Mammary epithelial cell (primary cell): ENCODE measurements at regions of chr7 and their contacts with region 1.

Region 1: DNA sequence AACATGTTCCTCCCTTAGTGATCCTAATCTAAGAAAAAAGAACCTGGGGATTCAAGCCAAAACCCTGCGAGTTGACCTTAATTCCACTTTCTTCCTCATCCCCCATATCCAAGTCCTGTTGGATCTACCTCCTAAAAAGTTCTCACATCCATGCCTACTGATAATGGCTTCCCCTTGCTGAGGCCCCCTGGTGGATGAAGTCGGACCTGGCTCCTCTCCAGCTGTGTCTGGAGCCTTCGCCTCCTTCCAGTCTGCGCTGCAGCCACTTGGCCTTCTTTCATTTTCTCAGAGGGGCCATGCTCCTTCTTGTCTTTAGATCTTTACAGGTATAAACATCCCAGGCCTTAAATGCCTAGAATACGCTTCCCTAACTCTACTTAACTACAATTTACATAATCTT is 8.1 kb downstream of the PDE1C start:
- DNase-seq: peak; percentile 64
- H3K4me3 ChIP-seq: peak overlapping the region in 2 of 3 experiments; percentile 21 to 26
- H3K27ac ChIP-seq: no peak overlapping the region
- H3K4me1 ChIP-seq: peaks cover 26% of the 10 kb centered on the region
- H3K27me3 ChIP-seq: no peaks in the 10 kb centered on the region
- CTCF ChIP-seq: peak; percentile 73 to 79

Region 2: GRCh38 chr7:31782411-31782991 is 279.6 kb before region 1 on chr7:
- CTCF ChIA-PET with region 1: no interaction called
- dilution Hi-C with region 1: no loop called
- in situ Hi-C with region 1: no loop called
- intact Hi-C with region 1: loop called (anchors 2 kb)
- DNase-seq: peak; percentile 69
- H3K4me3 ChIP-seq: no peak overlapping the region
- H3K27ac ChIP-seq: no peak overlapping the region
- H3K4me1 ChIP-seq: no peaks in the 10 kb centered on the region
- H3K27me3 ChIP-seq: no peaks in the 10 kb centered on the region
- CTCF ChIP-seq: peak; percentile 82 to 83

Region 3: GRCh38 chr7:31814187-31814586 is 248.0 kb before region 1 on chr7:
- CTCF ChIA-PET with region 1: no interaction called
- dilution Hi-C with region 1: no loop called
- in situ Hi-C with region 1: no loop called
- intact Hi-C with region 1: loop called (anchors 1 kb)
- DNase-seq: no peak
- H3K4me3 ChIP-seq: no peak overlapping the region
- H3K27ac ChIP-seq: no peak overlapping the region
- H3K4me1 ChIP-seq: no peaks in the 10 kb centered on the region
- H3K27me3 ChIP-seq: no peaks in the 10 kb centered on the region
- CTCF ChIP-seq: peak in 1 of 2 donors; percentile 30

Region 4: GRCh38 chr7:31826753-31827152 is 235.4 kb before region 1 on chr7:
- CTCF ChIA-PET with region 1: no interaction called
- dilution Hi-C with region 1: no loop called
- in situ Hi-C with region 1: no loop called
- intact Hi-C with region 1: loop called (anchors 1 kb)
- DNase-seq: no peak
- H3K4me3 ChIP-seq: no peak overlapping the region
- H3K27ac ChIP-seq: no peak overlapping the region
- H3K4me1 ChIP-seq: no peaks in the 10 kb centered on the region
- H3K27me3 ChIP-seq: no peaks in the 10 kb centered on the region
- CTCF ChIP-seq: no peak

Region 5: GRCh38 chr7:31883761-31884164 is 178.4 kb before region 1 on chr7:
- CTCF ChIA-PET with region 1: interaction called, 4 read pairs
- dilution Hi-C with region 1: no loop called
- in situ Hi-C with region 1: no loop called
- intact Hi-C with region 1: loop called (anchors 2 kb)
- DNase-seq: peak; percentile 91
- H3K4me3 ChIP-seq: peak overlapping the region in 1 of 3 experiments; percentile 4
- H3K27ac ChIP-seq: peak overlapping the region; percentile 81
- H3K4me1 ChIP-seq: peaks cover 27% of the 10 kb centered on the region
- H3K27me3 ChIP-seq: no peaks in the 10 kb centered on the region
- CTCF ChIP-seq: no peak

Region 6: GRCh38 chr7:31948029-31948428 is 114.1 kb before region 1 on chr7:
- CTCF ChIA-PET with region 1: interaction called, 3 read pairs
- dilution Hi-C with region 1: no loop called
- in situ Hi-C with region 1: no loop called
- intact Hi-C with region 1: loop called (anchors 5 kb)
- DNase-seq: peak; percentile 93
- H3K4me3 ChIP-seq: no peak overlapping the region
- H3K27ac ChIP-seq: peak overlapping the region; percentile 89
- H3K4me1 ChIP-seq: peaks cover 28% of the 10 kb centered on the region
- H3K27me3 ChIP-seq: no peaks in the 10 kb centered on the region
- CTCF ChIP-seq: no peak

Region 7: DNA sequence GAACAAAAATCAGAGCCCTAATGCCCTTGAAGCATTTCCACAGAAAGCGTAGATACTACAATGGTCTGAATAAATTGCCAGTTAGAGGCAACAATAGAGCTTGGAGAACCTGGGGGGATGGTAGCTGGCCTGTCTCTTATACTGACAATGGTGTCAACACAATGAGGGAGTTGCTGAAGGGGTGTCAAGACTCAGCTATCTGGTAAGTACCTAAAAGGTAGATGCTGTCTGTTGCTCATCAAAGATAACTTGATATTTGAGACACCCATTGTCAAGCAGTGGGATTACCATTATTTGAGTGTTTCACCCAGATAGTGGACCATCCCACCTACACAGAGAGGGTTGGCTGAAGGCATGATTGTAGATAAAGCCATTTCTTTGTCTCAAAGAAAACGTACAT is 64.7 kb before region 1 on chr7:
- CTCF ChIA-PET with region 1: no interaction called
- dilution Hi-C with region 1: no loop called
- in situ Hi-C with region 1: no loop called
- intact Hi-C with region 1: no loop called
- DNase-seq: no peak
- H3K4me3 ChIP-seq: no peak overlapping the region
- H3K27ac ChIP-seq: no peak overlapping the region
- H3K4me1 ChIP-seq: no peaks in the 10 kb centered on the region
- H3K27me3 ChIP-seq: no peaks in the 10 kb centered on the region
- CTCF ChIP-seq: no peak

Region 8: GRCh38 chr7:32579776-32580175 is 517.6 kb after region 1 on chr7:
- CTCF ChIA-PET with region 1: no interaction called
- dilution Hi-C with region 1: no loop called
- in situ Hi-C with region 1: no loop called
- intact Hi-C with region 1: no loop called
- DNase-seq: peak; percentile 9
- H3K4me3 ChIP-seq: no peak overlapping the region
- H3K27ac ChIP-seq: no peak overlapping the region
- H3K4me1 ChIP-seq: no peaks in the 10 kb centered on the region
- H3K27me3 ChIP-seq: no peaks in the 10 kb centered on the region
- CTCF ChIP-seq: no peak